ENCODE measurements at regions of chr2 and their contacts with region 1.

Region 1: DNA sequence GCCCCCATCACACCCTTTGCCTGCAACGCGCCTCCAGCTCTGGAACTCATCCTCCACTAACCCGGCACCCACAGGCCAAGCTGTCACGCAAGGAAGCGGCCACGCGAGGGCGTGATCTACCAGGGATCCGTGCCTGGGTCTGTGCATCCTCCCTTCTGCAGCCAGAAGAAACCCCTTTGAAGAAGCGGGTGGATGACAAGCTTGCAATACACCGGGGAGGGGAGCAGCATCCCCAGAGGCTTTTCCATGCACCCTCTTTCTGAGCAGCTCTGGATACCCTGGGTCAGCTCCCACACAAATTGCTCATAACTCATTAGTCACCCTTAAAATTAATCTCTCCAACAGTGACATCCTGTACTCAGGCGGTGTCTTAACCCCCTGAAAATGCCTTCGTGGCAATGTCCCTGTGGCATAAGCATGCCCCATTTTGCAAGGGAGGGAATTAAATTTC is 47.6 kb downstream of the PDCL3 start:
- DNase-seq: peak; percentile 38
- ATAC-seq: peak; percentile 88
- H3K4me3 ChIP-seq: no peak overlapping the region
- H3K27ac ChIP-seq: no peak overlapping the region
- H3K4me1 ChIP-seq: peaks cover 0 to 5% of the 10 kb centered on the region in 2 experiments; a peak in 1 of 4 replicates
- H3K27me3 ChIP-seq: 0 out of 2 replicates have a peak, but pooled peaks cover under 1% of the 10 kb centered on the region
- CTCF ChIP-seq: peak; percentile 66 to 77 (median 69); a peak in 5 of 6 replicates
- POLR2A ChIP-seq: no peak
- RAD21 ChIP-seq: peak; percentile 92

Region 2: DNA sequence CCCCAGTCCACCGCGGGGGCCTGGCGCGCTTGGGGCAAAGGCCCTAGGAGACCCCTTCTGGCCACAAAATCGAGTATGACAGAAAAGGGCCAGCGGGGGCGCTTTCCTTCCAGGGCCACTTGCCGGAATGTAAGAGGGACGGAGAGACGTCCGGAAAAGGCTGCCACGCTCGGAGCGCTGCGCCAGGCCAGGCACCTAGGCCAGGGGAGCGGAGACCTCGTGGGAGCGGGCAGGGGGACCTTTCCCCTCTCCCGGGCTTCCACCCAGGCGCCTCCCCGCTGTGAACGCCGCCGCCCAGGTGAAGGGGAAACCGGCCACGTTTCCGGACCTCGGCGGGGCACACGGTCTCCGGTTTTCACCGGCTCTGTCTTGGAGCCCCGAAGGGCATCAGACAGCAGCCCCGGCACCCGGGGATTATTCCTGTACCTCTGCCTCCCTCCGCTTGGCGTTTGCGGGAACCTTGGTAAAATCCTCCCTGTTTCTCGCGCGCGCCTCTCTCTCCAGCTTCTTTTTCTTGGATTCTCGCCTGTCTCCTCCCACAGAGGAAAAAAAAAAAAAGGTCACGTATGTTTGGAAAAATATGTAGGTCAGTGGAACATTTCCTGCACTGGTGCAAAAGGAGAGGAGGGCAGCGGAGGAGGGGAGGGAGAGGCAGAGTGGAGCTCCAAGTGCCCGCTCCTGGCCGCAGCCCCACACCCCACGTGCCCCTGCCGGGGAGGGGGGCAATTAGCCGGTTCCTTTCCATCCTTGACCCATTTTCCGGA is 208.4 kb after region 1 on chr2:
- CTCF ChIA-PET with region 1: no interaction called
- POLR2A ChIA-PET with region 1: no interaction called
- RAD21 ChIA-PET with region 1: no interaction called
- intact Hi-C with region 1: loop called (anchors 10 kb)
- DNase-seq: peak; percentile 10
- ATAC-seq: peak; percentile 58
- H3K4me3 ChIP-seq: peak overlapping the region; percentile 60 to 67
- H3K27ac ChIP-seq: peak overlapping the region; percentile 58
- H3K4me1 ChIP-seq: peaks cover 3 to 41% of the 10 kb centered on the region in 2 experiments; a peak in 3 of 4 replicates
- H3K27me3 ChIP-seq: no peaks in the 10 kb centered on the region
- CTCF ChIP-seq: peak; percentile 38 to 46 (median 46); a peak in 4 of 6 replicates
- POLR2A ChIP-seq: no peak
- RAD21 ChIP-seq: no peak

Region 3: DNA sequence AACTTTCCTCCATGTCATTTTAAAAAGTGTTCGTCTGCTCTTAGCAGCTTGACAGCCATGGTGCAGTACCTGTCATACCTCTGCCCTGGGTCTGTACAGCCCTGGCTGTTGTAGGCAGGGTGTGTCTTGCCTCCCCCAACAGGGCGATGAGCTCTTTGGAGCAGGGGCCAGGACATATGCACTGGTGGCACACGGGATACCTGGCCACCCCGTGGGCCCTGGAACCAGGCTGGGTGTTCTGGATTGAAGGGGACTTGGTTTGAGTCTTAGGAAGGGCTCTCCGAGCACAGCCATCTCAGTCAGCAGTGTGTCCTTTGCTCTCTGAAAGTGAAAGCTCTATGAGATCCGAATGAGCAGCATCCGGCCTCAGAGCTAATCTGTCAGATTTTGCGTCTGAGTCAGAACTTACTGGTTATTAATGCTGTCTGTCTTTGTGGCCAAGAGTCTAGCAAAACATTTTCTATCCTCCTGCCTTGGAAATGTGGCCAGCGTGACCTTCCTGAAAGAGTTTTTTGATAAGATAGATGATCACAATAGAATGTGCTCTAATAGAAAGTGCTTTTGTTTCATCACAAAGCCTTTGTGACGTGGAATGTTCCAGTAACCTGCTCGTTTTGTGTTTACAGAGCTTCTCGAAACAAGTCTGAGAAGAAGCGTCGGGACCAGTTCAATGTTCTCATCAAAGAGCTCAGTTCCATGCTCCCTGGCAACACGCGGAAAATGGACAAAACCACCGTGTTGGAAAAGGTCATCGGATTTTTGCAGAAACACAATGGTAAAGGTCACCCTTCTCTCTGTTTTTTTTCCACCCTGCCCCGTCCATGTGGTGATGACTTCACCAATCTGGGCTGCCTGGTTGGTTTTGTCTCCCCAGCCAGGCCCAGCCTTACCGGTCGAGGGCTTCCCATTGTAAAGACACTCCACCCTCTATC is 314.4 kb after region 1 on chr2:
- CTCF ChIA-PET with region 1: no interaction called
- POLR2A ChIA-PET with region 1: no interaction called
- RAD21 ChIA-PET with region 1: no interaction called
- intact Hi-C with region 1: no loop called
- DNase-seq: no peak
- ATAC-seq: no peak
- H3K4me3 ChIP-seq: no peak overlapping the region
- H3K27ac ChIP-seq: no peak overlapping the region
- H3K4me1 ChIP-seq: no peaks in the 10 kb centered on the region
- H3K27me3 ChIP-seq: no peaks in the 10 kb centered on the region
- CTCF ChIP-seq: no peak
- POLR2A ChIP-seq: no peak
- RAD21 ChIP-seq: no peak

Region 4: GRCh38 chr2:101001691-101002561 is 391.5 kb after region 1 on chr2 and contains the start of gene RPL31:
- CTCF ChIA-PET with region 1: interaction called, 4 read pairs
- POLR2A ChIA-PET with region 1: interaction called, 4 read pairs
- RAD21 ChIA-PET with region 1: no interaction called
- intact Hi-C with region 1: loop called (anchors 5 kb)
- DNase-seq: peak; percentile 91
- ATAC-seq: peak; percentile 86
- H3K4me3 ChIP-seq: peak within 1 kb of the TSS; percentile 66 to 89
- H3K27ac ChIP-seq: peak within 1 kb of the TSS; percentile 88
- H3K4me1 ChIP-seq: peaks cover 9 to 19% of the 10 kb centered on the region in 2 experiments
- H3K27me3 ChIP-seq: no peaks in the 10 kb centered on the region
- CTCF ChIP-seq: no peak
- POLR2A ChIP-seq: peak; percentile 97
- RAD21 ChIP-seq: no peak; the same call in 1 of the 2 replicates
- total RNA-seq, gene RPL31: 1,340 TPM

Region 5: DNA sequence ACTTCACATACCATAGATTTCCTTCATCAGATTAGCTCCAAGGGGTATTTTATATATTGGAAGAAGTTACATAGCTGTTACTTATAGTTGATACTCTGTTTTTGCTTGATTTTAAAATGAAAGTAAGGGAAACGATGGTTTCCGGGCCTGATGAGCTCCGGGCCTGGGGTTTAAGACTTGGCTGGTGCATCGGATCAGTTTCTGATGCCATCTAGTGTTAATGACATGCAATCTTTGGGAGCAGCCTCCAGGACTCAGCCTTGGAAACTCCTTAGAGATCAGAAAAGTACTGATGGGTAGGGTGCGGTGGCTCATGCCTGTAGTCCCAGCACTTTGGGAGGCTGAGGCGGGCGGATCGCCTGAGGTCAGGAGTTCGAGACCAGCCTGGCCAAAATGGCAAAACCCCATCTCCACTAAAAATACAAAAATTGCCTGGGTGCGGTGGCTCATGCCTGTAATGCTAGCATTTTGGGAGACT is 595.2 kb after region 1 on chr2:
- CTCF ChIA-PET with region 1: interaction called, 9 read pairs
- POLR2A ChIA-PET with region 1: no interaction called
- RAD21 ChIA-PET with region 1: interaction called, 3 read pairs
- intact Hi-C with region 1: loop called (anchors 10 kb)
- DNase-seq: peak; percentile 91
- ATAC-seq: peak; percentile 97
- H3K4me3 ChIP-seq: peak overlapping the region; percentile 8 to 29
- H3K27ac ChIP-seq: peak overlapping the region; percentile 27; the same call in 1 of the 2 replicates
- H3K4me1 ChIP-seq: peaks cover 3 to 7% of the 10 kb centered on the region in 2 experiments; a peak in 2 of 4 replicates
- H3K27me3 ChIP-seq: no peaks in the 10 kb centered on the region
- CTCF ChIP-seq: peak; percentile 46 to 79 (median 64)
- POLR2A ChIP-seq: no peak
- RAD21 ChIP-seq: peak; percentile 87

Region 6: DNA sequence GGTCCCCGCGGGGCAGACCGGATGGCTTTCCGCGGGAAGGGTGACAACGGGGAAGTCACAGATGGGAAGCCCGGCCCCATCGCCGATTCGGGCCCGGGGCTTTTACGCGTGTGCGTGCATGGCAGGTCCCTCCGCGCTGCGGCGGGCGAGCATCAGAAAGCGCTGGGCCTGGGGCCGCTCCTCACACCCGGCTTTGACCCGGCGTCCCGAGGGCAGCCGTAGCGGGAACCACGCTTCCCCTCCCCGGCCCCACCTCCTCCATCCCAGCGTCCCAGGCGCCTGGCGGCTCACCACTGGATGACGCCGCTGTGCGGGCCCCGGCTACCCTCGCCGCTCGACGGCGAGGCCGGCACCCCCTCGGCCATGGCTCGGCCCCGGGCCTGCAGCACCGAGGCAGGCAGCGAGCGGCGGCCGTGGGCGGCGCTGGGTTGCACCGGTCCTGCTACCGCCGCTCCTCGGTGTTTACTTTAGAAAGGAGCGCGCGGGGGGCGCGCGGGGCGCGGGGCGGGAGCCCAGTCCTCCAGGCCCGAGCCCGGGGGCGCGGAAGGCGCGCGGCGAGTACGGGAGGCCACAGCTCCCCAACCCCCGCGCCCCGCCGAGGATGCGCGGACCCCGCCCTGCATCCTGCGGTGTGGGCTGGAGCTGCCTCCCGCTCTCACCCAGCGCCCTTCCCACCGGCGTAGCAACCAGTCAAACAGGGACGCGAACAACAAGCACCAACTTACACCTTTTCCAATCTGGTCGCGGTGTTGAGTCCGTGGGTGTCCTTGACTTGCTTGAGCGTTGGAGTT is 863.7 kb after region 1 on chr2:
- CTCF ChIA-PET with region 1: no interaction called
- POLR2A ChIA-PET with region 1: no interaction called
- RAD21 ChIA-PET with region 1: no interaction called
- intact Hi-C with region 1: no loop called
- DNase-seq: no peak
- ATAC-seq: no peak
- H3K4me3 ChIP-seq: no peak overlapping the region
- H3K27ac ChIP-seq: no peak overlapping the region
- H3K4me1 ChIP-seq: no peaks in the 10 kb centered on the region
- H3K27me3 ChIP-seq: no peaks in the 10 kb centered on the region
- CTCF ChIP-seq: no peak
- POLR2A ChIP-seq: no peak
- RAD21 ChIP-seq: no peak

Measured in HCT116 (cell line).